AG04449 (cell line): ENCODE measurements at regions of chr3 and their contacts with region 1.

Region 1: GRCh38 chr3:58568572-58569286 is 8.5 kb downstream of the FAM107A start:
- DNase-seq: no peak
- H3K4me3 ChIP-seq: no peak overlapping the region
- CTCF ChIP-seq: peak; percentile 87

Region 2: DNA sequence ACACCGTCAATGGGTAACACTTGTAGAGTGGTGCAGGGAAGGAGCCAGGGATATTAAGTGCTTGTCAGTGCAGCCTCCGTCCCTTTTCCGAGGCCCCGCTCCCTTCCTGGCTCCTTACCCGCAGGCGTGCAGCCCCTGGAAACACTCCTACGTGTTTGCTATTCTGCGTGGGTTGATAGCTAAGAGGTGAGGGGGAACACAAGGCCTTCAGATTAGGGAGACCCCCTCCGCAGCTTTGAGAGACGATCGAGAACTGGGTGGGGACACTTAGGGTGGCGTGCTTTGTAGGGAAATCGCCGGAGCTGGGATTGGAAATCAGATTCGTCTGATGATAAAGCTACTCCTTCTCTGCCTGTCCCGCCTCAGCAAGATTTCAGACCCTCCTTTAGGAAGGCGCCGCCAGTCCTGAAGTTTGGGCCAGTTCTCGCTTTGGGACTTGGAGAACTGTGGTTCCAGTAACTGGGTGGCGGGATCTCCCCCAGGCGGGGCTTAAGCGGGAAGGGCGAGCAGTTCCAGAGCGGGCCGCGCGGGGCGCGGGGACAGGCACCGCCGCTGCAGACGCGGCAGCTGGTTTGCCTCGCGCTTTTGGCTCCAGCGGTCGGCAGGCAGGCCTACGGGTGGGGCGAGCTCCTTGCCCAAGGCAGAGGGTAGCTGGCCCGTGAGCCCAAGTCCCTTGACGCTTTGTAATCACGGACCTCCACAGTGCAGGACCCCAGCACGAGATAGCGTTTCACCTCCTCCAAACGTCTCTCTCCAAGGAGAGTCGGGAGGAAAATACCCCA is 16.5 kb after region 1 on chr3:
- CTCF ChIA-PET with region 1: interaction called, 160 read pairs
- POLR2A ChIA-PET with region 1: no interaction called
- DNase-seq: no peak
- H3K4me3 ChIP-seq: peak overlapping the region; percentile 62
- CTCF ChIP-seq: peak; percentile 86

Region 3: DNA sequence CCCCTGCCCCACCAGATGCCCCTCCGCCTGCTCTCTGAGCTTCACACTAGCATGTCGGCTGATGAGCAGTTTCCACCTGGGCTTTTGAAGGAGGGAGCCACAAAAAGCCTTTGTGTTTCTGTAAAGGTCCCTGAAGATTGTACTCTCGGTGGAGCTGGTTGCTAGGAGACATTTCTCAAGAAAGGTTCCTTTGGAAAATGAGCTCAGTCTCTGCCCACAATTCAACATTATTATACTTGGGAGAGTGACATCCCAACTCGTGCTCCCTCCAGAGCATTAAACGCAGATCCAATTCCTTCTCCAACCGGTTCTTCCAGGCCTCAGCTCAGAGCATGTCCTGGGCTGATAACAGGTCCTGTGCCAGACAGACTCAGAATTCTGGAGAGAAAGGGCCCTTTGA is 35.3 kb after region 1 on chr3:
- CTCF ChIA-PET with region 1: interaction called, 11 read pairs
- POLR2A ChIA-PET with region 1: no interaction called
- DNase-seq: no peak
- H3K4me3 ChIP-seq: no peak overlapping the region
- CTCF ChIP-seq: no peak

Region 4: GRCh38 chr3:58609990-58610389 is 41.3 kb after region 1 on chr3:
- CTCF ChIA-PET with region 1: interaction called, 22 read pairs
- POLR2A ChIA-PET with region 1: no interaction called
- DNase-seq: no peak
- H3K4me3 ChIP-seq: no peak overlapping the region
- CTCF ChIP-seq: no peak

Region 5: DNA sequence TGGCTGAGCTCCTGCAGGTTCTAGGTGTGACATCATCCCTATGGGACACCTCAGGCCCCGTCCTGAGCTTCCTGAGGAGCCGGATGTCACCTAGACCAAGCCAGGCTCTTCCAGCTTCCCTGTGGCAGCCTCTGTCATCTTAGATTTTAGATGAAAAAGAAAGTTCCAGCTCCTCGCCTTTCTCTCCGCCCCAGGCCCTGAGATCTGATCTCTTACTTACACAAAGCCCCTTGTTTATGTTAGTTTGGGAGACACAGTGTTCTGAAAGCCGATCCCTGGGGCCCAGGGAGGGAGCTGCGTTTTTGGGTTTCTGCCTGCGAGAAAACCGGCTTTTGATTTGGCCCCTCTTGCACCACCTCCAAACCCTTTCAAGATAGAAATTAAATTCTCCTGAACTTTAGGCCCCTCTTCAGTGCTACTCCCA is 48.6 kb after region 1 on chr3:
- CTCF ChIA-PET with region 1: interaction called, 22 read pairs
- POLR2A ChIA-PET with region 1: no interaction called
- DNase-seq: no peak
- H3K4me3 ChIP-seq: no peak overlapping the region
- CTCF ChIP-seq: no peak

Region 6: DNA sequence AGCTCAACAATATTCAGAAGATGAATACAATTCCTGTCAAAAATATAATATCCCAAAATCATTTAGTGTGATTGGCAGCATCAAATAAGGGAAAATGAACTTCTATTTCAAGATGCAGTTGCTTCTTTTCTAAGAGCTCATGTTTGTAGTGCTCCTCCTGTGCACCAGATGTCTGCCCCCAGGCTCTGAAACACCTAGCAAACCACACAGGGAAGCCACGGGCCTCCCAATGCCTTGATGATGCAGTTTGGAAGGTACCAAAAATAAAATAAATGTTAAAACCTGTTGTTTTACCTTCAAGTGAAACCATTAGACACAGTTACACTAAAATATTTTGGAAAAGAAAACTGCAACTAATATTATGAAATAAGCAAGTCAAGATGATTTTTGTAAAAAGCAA is 458.9 kb after region 1 on chr3:
- CTCF ChIA-PET with region 1: no interaction called
- POLR2A ChIA-PET with region 1: no interaction called
- DNase-seq: no peak
- H3K4me3 ChIP-seq: no peak overlapping the region
- CTCF ChIP-seq: no peak